H1 (cell line): ENCODE measurements at regions of chrX and their contacts with region 1.

Region 1: DNA sequence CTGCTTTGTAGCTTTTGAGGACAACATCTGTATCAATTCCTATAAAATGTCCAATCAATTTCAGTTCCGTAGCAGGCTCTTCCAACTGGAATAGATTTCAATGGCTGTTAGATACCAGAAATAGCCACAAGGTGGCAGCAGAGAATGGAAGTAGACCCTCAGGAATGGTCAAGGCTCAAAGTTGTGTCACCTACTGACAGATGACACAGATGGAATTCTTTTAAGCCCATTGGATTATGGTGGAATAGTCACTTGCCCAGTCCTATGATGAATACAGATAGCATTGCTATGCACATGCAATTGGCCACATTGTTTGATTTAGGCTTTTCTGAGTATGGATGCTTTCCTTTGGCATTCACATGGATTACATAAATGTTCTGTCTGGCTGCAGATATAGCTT is 130.4 kb upstream of the RADX start:
- DNase-seq: peak in 1 of 2 experiments; percentile 60
- H3K4me3 ChIP-seq: no peak overlapping the region
- H3K27ac ChIP-seq: no peak overlapping the region
- H3K4me1 ChIP-seq: no peaks in the 10 kb centered on the region
- H3K27me3 ChIP-seq: no peaks in the 10 kb centered on the region
- CTCF ChIP-seq: peak in 2 of 3 experiments; percentile 48 to 53; a peak in 3 of 4 replicates
- EP300 ChIP-seq: no peak
- POLR2A ChIP-seq: no peak
- RAD21 ChIP-seq: peak; percentile 80 to 83

Region 2: DNA sequence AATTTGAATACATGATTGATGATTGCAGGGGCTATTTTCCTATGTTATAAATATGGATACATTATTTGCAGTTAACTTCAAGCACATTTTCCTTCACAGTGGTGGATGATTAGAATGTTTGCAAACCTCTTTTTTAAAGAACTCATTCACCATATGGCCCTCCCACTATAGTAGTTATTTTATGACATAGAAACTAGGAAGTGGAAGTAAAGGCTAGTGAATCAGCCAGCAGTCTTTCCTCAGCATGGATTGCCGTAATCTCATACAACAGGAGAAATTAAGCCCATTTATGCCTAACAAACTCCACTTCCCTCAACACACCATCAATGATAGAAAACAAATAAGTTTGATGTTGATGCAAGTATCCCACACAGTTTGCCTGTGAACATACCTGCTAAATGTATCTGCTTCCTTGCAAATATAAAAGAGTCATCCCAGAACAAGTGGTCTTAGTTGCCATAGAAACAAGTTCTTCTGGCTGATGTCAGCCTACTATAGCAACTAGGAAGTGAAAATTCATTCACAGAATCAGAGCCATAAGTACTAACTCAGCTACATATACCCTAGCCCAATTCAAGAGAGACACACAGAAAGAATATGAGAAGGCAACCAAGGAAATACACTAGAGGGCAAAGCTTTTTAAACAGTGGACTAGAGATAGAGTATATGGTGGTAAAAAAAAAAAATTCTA is 29.5 kb after region 1 on chrX:
- CTCF ChIA-PET with region 1: interaction called, 10 read pairs
- POLR2A ChIA-PET with region 1: no interaction called
- DNase-seq: no peak
- H3K4me3 ChIP-seq: no peak overlapping the region
- H3K27ac ChIP-seq: no peak overlapping the region
- H3K4me1 ChIP-seq: no peaks in the 10 kb centered on the region
- H3K27me3 ChIP-seq: no peaks in the 10 kb centered on the region
- CTCF ChIP-seq: no peak
- EP300 ChIP-seq: no peak
- POLR2A ChIP-seq: no peak
- RAD21 ChIP-seq: no peak

Region 3: DNA sequence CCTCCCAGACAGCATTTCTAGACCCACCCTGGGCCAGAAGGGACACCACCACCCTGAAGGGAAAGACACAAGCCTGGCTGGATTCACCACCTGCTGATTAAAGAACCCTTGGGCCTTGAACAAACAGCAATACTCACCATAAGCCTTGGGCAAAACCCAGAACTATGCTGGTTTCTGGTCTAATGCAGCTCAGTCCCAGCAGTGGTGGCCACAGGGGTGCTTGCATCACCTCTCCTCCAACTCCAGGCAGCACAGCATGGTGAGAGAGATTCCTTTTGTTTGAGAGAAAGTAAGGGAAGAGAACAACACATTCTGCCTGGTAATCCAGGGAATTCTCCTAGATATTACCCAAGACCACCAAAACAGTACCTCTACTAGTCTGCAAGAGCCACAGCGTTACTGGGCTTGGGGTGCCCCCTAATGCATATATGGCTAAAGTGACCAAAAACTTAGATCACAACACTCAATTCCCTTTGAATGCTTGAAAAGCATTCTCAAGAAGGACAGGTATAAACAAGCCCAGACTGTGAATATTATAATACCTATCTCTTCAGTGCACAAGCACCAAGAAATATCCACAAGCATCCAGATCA is 270.8 kb after region 1 on chrX:
- CTCF ChIA-PET with region 1: interaction called, 12 read pairs
- POLR2A ChIA-PET with region 1: no interaction called
- DNase-seq: no peak
- H3K4me3 ChIP-seq: no peak overlapping the region
- H3K27ac ChIP-seq: no peak overlapping the region; the same call in 1 of the 2 replicates
- H3K4me1 ChIP-seq: peaks cover 0 to 6% (median 2%) of the 10 kb centered on the region in 4 experiments; a peak in 4 of 7 replicates
- H3K27me3 ChIP-seq: no peaks in the 10 kb centered on the region
- CTCF ChIP-seq: peak in 2 of 3 experiments; percentile 24 to 47; a peak in 3 of 4 replicates
- EP300 ChIP-seq: no peak
- POLR2A ChIP-seq: no peak
- RAD21 ChIP-seq: peak; percentile 71 to 72